ENCODE measurements at regions of chr18 and their contacts with region 1.

Region 1: DNA sequence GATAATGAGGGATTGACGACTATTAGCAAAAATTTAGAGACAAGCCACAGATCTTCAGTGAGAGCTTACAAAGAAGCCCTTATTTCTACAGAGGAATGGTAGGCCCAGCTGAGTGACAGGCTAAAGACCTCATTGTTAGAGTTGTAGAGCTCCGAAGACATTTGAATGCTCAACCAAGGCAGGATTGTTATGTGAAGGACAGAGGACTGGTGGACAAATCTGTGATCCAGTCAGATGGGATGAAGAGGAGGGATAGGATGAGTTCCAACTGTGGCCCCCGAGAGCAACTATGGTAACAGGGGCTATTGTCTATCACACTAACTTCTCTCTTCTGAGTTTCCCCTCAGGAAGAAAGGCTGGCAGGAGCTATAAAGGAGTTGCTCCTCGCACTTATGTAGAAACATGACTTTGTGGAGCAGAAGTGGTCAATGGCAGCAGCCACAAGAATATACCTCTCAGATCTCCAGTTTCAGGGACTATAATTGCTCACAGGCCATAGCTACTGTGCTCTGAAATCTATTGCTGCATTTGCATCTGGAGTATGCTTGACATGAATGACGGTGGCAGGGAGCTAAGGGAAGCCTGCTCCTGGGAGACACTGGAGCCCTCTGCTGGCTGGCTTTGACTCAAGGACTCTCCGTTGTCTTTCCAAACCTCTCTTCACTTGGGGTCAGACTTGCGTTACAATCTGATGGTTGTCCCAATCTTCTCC is 50.3 kb upstream of the GREB1L start:
- DNase-seq: peak; percentile 30
- H3K4me3 ChIP-seq: no peak overlapping the region
- H3K27ac ChIP-seq: no peak overlapping the region
- H3K27me3 ChIP-seq: no peaks in the 10 kb centered on the region
- CTCF ChIP-seq: peak; percentile 84

Region 2: GRCh38 chr18:21074336-21075323 is 117.1 kb before region 1 on chr18:
- CTCF ChIA-PET with region 1: interaction called, 10 read pairs
- POLR2A ChIA-PET with region 1: no interaction called
- DNase-seq: no peak
- H3K4me3 ChIP-seq: no peak overlapping the region
- H3K27ac ChIP-seq: no peak overlapping the region
- H3K27me3 ChIP-seq: no peaks in the 10 kb centered on the region
- CTCF ChIP-seq: no peak

Region 3: DNA sequence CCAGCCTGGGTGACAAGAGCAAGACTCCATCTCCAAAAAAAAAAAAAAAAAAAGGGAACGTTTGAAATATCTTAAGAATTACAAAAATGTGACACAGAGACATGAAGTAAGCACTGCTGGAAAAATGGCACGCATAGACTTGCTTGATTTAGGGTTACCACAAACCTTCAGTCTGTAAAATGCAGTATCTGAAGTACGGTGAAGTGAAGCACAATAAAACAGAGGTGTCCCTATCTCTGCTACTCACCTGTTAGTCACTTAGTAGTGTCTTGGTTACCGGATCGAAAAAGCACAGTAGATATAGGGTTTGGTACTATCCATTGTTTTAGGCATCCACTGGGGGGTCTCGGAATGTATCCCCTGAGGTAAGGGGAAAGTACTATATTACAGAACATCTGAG is 38.7 kb after region 1 on chr18:
- CTCF ChIA-PET with region 1: no interaction called
- POLR2A ChIA-PET with region 1: no interaction called
- DNase-seq: no peak
- H3K4me3 ChIP-seq: no peak overlapping the region
- H3K27ac ChIP-seq: no peak overlapping the region
- H3K27me3 ChIP-seq: no peaks in the 10 kb centered on the region
- CTCF ChIP-seq: no peak

Region 4: GRCh38 chr18:21444465-21445023 is 252.8 kb after region 1 on chr18:
- CTCF ChIA-PET with region 1: interaction called, 177 read pairs
- POLR2A ChIA-PET with region 1: no interaction called
- DNase-seq: peak; percentile 2
- H3K4me3 ChIP-seq: no peak overlapping the region
- H3K27ac ChIP-seq: no peak overlapping the region
- H3K27me3 ChIP-seq: peaks cover 2% of the 10 kb centered on the region
- CTCF ChIP-seq: peak; percentile 81

Region 5: GRCh38 chr18:21489119-21489750 is 297.5 kb after region 1 on chr18:
- CTCF ChIA-PET with region 1: interaction called, 10 read pairs
- POLR2A ChIA-PET with region 1: no interaction called
- DNase-seq: peak; percentile 13
- H3K4me3 ChIP-seq: no peak overlapping the region
- H3K27ac ChIP-seq: no peak overlapping the region
- H3K27me3 ChIP-seq: peaks cover 2% of the 10 kb centered on the region
- CTCF ChIP-seq: peak; percentile 86

Region 6: DNA sequence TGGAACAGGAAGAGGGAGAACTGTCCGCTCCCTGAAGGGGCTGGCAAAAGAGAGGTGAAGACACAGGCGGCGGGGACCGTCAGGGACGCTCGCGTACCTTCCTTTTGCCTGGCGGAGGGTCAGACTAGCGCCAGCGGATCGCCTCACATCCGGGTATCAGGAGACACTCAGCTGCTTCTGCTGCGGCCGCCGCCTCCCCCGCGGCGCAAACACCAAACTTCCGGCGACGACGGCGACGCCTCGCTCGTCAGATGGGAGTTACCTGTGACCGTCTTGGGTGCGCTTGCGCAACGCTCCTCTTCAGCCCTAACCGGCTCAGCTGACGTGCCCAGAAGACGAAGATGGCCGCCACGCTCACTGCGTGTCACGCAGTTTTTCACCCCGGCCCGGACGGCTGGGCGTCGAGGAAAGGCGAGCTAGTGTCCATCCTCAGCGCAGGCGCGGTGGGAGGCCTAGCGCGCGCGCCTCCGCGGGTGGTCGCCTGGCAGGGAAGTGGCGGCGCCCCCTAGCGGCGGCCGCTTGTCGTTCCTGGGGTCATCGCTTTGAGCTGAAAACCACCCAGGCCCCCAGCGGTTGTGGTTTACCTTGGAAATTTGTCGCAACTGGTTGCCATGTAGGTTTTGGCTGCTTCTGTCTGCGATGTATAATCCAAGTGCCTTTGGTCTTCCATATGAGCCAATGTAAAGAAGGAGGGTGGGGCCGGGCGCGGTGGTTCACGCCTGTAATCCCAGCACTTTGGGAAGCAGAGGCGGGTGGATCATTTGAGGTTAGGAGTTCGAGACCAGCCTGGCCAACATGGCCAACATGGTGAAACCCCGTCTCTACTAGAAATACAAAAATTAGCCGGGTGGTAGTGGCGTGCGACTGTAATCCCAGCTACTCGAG is 409.0 kb after region 1 on chr18 and contains the start of gene ESCO1:
- CTCF ChIA-PET with region 1: interaction called, 13 read pairs
- POLR2A ChIA-PET with region 1: no interaction called
- DNase-seq: peak; percentile 95
- H3K4me3 ChIP-seq: peak within 1 kb of the TSS; percentile 99
- H3K27ac ChIP-seq: peak within 1 kb of the TSS; percentile 97
- H3K27me3 ChIP-seq: no peaks in the 10 kb centered on the region
- CTCF ChIP-seq: peak; percentile 72
- polyA plus RNA-seq, gene ESCO1: 5.6 and 8.9 TPM in 2 replicates

Measured in AG04450 (cell line).